ENCODE measurements at regions of chr6 and their contacts with region 1.

Region 1: DNA sequence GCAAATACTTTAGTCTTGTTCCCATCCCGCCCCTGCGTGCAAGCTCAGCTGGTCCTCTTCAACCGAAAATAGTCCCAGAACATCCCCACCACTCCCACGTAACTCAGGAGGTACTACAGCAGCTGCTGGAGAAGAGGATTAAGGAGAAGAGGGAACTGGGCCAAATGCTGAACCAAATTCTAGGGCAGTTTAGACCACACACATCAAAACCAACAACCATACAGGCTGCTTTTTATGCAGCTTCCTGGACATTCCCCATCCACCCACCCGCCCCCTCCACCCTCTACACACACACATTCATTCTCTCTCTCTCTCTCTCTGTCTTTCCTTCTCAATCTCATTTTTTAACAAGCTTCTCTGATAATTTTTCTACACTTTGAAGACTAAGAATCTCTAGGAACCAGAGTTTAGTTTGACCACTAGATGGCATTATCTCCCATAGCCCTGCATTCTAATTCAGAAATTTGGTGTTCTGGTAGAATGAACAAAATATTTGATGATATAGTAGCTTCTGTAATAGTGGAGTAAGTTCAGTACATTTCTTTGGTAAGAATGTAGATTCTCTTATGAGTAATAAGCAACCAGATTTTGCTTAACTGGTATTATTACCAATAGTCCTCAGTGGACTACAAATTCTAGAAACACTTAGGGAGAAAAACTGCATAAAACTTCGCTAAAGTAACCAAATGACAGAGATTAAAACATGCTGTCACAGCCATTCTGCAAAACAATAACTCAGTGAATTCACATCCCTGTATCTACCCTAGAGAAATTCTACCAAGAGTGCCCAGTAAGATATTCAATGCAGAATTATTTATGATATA is 52.1 kb upstream of the BEND6 start:
- DNase-seq: peak in 1 of 4 donors; percentile 10
- ATAC-seq: no peak
- H3K4me3 ChIP-seq: no peak overlapping the region
- H3K27ac ChIP-seq: no peak overlapping the region
- H3K4me1 ChIP-seq: no peaks in the 10 kb centered on the region
- H3K27me3 ChIP-seq: no peaks in the 10 kb centered on the region
- CTCF ChIP-seq: peak; percentile 57 to 87 (median 63)
- POLR2A ChIP-seq: no peak

Region 2: GRCh38 chr6:56329271-56330050 is 573.4 kb before region 1 on chr6:
- intact Hi-C with region 1: no loop called
- DNase-seq: no peak
- ATAC-seq: peak; percentile 24
- H3K4me3 ChIP-seq: no peak overlapping the region
- H3K27ac ChIP-seq: no peak overlapping the region
- H3K4me1 ChIP-seq: no peaks in the 10 kb centered on the region
- H3K27me3 ChIP-seq: no peaks in the 10 kb centered on the region
- CTCF ChIP-seq: no peak
- POLR2A ChIP-seq: no peak

Region 3: DNA sequence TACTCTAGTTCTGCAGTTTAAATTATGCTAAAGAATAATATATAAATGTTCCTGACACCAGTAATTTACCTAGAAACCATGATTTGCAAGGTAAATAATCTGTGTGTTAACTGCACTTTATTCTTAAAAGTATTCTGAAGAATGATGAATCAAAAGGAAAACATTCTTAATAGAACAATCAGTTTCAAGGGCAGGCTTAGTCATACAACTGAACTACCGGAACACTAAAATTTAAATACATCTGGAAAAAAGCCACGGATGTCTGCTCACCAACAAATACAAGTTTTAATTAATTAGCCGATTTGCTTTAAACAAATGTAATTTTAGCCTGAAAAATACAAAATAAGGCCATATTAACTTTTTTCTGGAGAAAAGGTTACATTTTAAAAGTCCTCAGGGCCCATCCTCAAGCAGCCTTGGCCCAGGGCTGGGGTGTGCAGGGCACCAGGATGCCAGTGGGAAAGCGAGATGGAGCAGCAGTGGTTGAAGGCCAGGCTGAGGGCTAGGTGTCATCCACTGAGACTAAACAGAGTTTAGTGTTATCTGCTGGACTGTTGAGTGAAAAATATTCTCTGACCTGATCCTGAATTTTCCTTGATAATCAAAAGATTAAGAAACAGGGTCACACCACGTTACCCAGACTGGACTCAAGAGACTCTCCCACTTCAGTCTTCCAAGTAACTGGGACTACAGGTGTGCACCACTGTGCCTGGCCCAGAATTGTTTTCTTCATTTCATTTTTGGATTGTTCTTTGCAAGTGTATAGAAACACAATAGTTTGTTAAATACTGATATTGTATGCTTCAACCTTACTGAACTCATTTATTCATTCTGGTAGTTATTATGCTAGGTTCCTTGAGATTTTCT is 172.0 kb before region 1 on chr6:
- intact Hi-C with region 1: no loop called
- DNase-seq: no peak
- ATAC-seq: no peak
- H3K4me3 ChIP-seq: no peak overlapping the region
- H3K27ac ChIP-seq: no peak overlapping the region
- H3K4me1 ChIP-seq: peaks cover 47% of the 10 kb centered on the region
- H3K27me3 ChIP-seq: no peaks in the 10 kb centered on the region
- CTCF ChIP-seq: no peak
- POLR2A ChIP-seq: no peak

Region 4: GRCh38 chr6:57097596-57097995 is 194.7 kb after region 1 on chr6:
- intact Hi-C with region 1: no loop called
- DNase-seq: no peak
- ATAC-seq: no peak
- H3K4me3 ChIP-seq: no peak overlapping the region
- H3K27ac ChIP-seq: no peak overlapping the region
- H3K4me1 ChIP-seq: peaks cover 17% of the 10 kb centered on the region
- H3K27me3 ChIP-seq: no peaks in the 10 kb centered on the region
- CTCF ChIP-seq: no peak
- POLR2A ChIP-seq: no peak

Region 5: GRCh38 chr6:57313711-57314471 is 411.0 kb after region 1 on chr6:
- intact Hi-C with region 1: loop called (anchors 5 kb)
- DNase-seq: no peak
- ATAC-seq: no peak
- H3K4me3 ChIP-seq: no peak overlapping the region
- H3K27ac ChIP-seq: no peak overlapping the region
- H3K4me1 ChIP-seq: peaks cover 5% of the 10 kb centered on the region
- H3K27me3 ChIP-seq: no peaks in the 10 kb centered on the region
- CTCF ChIP-seq: no peak
- POLR2A ChIP-seq: no peak

Region 6: DNA sequence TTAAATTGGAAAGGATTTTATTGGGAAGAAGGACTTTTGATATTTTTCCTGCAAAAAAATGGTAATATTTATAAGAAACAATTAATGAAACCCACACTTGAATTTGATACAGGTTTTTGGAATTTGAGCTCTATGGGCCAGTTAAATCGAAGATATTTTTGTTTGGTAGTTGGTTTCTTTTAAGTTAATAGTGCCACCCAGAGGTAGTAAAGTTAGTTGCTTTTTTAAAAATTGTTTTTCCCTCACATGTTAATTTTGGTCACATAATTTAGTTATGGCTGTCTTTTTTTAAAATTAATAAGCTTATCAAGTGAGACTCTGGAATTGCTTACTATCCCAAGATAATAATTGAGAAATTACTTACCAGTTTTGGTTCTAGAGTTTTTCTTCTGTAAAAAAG is 421.7 kb after region 1 on chr6:
- intact Hi-C with region 1: loop called (anchors 5 kb)
- DNase-seq: no peak
- ATAC-seq: no peak
- H3K4me3 ChIP-seq: no peak overlapping the region
- H3K27ac ChIP-seq: no peak overlapping the region
- H3K4me1 ChIP-seq: no peaks in the 10 kb centered on the region
- H3K27me3 ChIP-seq: no peaks in the 10 kb centered on the region
- CTCF ChIP-seq: peak in 5 of 7 experiments; percentile 26 to 47 (median 41)
- POLR2A ChIP-seq: no peak

Measured in body of pancreas (tissue), 4 donors.